ENCODE measurements at regions of chr3 and their contacts with region 1.

Region 1: DNA sequence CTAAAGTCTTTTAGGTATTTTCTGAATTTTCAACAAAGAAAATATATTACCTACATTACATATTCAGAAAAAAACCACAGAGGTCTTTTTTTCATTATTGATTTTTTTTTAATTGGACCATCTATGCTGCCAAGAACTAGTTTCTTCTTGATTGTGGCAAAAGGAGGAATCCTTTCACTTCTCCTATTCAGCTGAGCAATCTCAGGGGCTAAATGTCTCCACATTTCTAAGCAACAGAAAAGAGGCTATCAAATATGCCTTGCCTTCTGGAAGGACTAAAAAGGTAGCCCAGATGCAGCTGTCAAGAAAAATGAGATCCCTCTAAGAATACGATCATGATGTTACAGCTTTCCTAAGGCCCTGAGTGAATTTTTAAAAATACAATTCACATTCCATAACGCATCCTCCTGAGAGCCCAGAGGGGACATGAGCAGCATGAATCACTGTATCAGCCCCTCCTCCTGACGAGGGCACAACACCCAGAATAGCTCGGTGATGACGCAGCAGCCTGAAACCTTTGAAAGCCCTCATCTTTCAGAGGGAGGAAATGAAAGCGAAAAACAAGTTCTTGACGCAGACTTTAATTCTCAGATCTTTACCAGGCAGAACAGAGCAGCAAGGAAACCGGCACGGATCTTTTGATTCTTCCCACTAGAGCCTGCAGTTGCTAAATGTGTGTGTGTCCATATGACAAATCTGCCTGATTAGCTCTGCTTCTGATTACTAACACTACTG is 24.6 kb downstream of the RUBCN start:
- DNase-seq: peak; percentile 93
- ATAC-seq: peak; percentile 94
- H3K4me3 ChIP-seq: peak overlapping the region in 4 of 5 experiments; percentile 38 to 57 (median 50)
- H3K4me3 Mint-ChIP-seq: peak overlapping the region; percentile 84
- H3K27ac ChIP-seq: peak overlapping the region; percentile 72 to 77
- H3K27ac Mint-ChIP-seq: peak overlapping the region; percentile 93
- H3K4me1 ChIP-seq: peaks cover 28% of the 10 kb centered on the region in 2 donors
- H3K4me1 Mint-ChIP-seq: peaks cover 51% of the 10 kb centered on the region
- H3K27me3 ChIP-seq: no peaks in the 10 kb centered on the region
- H3K27me3 Mint-ChIP-seq: no peaks in the 10 kb centered on the region
- CTCF ChIP-seq: no peak

Region 2: GRCh38 chr3:195932456-195933430 is 1779.4 kb before region 1 on chr3:
- CTCF ChIA-PET with region 1: no interaction called
- POLR2A ChIA-PET with region 1: no interaction called
- intact Hi-C with region 1: no loop called
- DNase-seq: no peak
- ATAC-seq: no peak
- H3K4me3 ChIP-seq: no peak overlapping the region
- H3K4me3 Mint-ChIP-seq: no peak overlapping the region
- H3K27ac ChIP-seq: no peak overlapping the region
- H3K27ac Mint-ChIP-seq: no peak overlapping the region
- H3K4me1 ChIP-seq: no peaks in the 10 kb centered on the region
- H3K4me1 Mint-ChIP-seq: no peaks in the 10 kb centered on the region
- H3K27me3 ChIP-seq: no peaks in the 10 kb centered on the region
- H3K27me3 Mint-ChIP-seq: no peaks in the 10 kb centered on the region
- CTCF ChIP-seq: no peak

Region 3: DNA sequence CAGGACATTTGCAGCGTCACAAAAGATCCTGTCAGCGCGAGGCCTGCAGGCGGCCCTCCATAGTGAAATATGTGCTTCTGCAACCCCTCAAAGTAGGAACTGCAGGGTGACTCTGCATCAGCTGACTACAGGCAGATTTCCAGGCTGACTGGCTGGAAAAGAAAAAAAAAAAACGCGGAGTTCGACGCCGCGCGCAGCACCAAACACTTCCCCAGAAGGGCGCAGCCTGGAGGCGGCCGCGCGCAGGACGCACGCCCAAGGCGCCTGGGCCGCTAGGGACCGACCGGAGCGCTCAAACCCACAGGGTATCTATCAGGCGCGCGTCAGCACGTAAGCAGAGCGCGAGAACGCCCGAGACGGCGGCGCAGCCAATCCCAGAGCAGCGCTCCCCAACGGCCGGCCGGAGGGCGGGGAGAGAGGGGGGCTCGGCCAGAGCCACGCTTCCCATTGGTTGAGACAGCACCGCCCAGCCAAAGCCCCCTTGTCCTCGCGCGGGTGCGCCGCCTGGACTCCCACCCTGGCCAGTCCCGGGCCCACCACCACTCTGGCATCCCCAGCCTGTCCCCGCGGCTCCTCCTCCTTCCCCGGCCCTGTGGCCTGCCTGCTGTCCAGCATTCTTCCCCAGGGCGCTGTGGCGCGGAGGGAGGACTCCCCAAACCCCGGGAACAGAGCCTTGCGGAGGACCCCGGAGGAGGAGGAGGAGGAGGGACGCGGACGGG is 157.4 kb before region 1 on chr3:
- CTCF ChIA-PET with region 1: no interaction called
- POLR2A ChIA-PET with region 1: no interaction called
- intact Hi-C with region 1: loop called (anchors 1 kb)
- DNase-seq: peak; percentile 95
- ATAC-seq: peak; percentile 93
- H3K4me3 ChIP-seq: peak overlapping the region; percentile 55 to 93 (median 76)
- H3K4me3 Mint-ChIP-seq: peak overlapping the region; percentile 94
- H3K27ac ChIP-seq: peak overlapping the region; percentile 80 to 92
- H3K27ac Mint-ChIP-seq: peak overlapping the region; percentile 90
- H3K4me1 ChIP-seq: peaks cover 6 to 13% of the 10 kb centered on the region in 2 donors
- H3K4me1 Mint-ChIP-seq: peaks cover 9% of the 10 kb centered on the region
- H3K27me3 ChIP-seq: peaks cover 0 to 2% (median 0%) of the 10 kb centered on the region in 4 experiments
- H3K27me3 Mint-ChIP-seq: peaks cover 7% of the 10 kb centered on the region
- CTCF ChIP-seq: peak; percentile 61

Region 4: DNA sequence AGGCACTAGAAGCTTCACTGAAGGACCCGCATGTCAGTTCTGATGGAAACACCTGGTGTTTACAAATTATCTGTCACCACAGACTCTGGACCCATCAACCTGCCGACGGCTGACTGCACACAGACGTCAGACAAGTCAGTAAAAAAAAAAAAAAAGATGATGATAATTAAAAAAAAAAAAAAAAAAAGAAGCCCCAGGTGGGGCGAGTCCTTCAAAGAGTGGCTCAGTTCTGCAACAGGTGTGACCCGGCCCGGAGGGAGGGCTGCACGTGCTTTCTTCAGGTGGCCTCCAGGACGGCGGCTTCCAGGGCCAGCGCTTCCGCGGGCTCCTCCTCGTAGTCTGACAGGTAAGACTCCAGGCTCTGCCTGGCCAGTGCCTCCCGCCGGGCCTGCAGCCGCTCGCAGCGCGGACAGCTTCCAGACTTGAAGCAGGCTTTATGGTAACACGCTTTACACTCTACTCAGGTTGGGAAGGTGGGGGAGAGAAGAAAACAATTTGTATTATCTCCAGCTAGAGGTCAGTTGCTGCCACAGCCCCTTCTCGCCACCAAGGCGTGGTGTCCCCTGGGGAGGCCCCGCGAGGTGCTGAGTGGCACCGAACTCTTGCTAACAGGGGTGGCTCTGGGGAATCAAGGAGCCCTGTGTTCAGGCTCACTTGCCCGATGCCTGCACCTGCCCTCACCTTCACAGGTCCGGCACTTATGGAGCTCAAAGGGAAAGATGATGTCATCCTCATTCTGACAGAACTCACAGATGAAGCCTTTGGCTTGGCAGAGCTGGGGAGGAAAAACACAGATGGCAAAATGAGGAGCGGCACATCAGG is 37.2 kb before region 1 on chr3:
- CTCF ChIA-PET with region 1: interaction called, 8 read pairs
- POLR2A ChIA-PET with region 1: no interaction called
- intact Hi-C with region 1: loop called (anchors 1 kb)
- DNase-seq: peak; percentile 80
- ATAC-seq: peak; percentile 91
- H3K4me3 ChIP-seq: no peak overlapping the region
- H3K4me3 Mint-ChIP-seq: peak overlapping the region; percentile 89
- H3K27ac ChIP-seq: peak overlapping the region; percentile 73
- H3K27ac Mint-ChIP-seq: peak overlapping the region; percentile 96
- H3K4me1 ChIP-seq: peaks cover 3 to 21% of the 10 kb centered on the region in 2 donors
- H3K4me1 Mint-ChIP-seq: peaks cover 47% of the 10 kb centered on the region
- H3K27me3 ChIP-seq: no peaks in the 10 kb centered on the region
- H3K27me3 Mint-ChIP-seq: no peaks in the 10 kb centered on the region
- CTCF ChIP-seq: no peak

Region 5: GRCh38 chr3:197692641-197693040 is 19.5 kb before region 1 on chr3:
- CTCF ChIA-PET with region 1: no interaction called
- POLR2A ChIA-PET with region 1: no interaction called
- intact Hi-C with region 1: no loop called
- DNase-seq: no peak
- ATAC-seq: no peak
- H3K4me3 ChIP-seq: no peak overlapping the region
- H3K4me3 Mint-ChIP-seq: no peak overlapping the region
- H3K27ac ChIP-seq: no peak overlapping the region
- H3K27ac Mint-ChIP-seq: peak overlapping the region; percentile 50
- H3K4me1 ChIP-seq: no peaks in the 10 kb centered on the region
- H3K4me1 Mint-ChIP-seq: no peaks in the 10 kb centered on the region
- H3K27me3 ChIP-seq: no peaks in the 10 kb centered on the region
- H3K27me3 Mint-ChIP-seq: no peaks in the 10 kb centered on the region
- CTCF ChIP-seq: no peak

Region 6: DNA sequence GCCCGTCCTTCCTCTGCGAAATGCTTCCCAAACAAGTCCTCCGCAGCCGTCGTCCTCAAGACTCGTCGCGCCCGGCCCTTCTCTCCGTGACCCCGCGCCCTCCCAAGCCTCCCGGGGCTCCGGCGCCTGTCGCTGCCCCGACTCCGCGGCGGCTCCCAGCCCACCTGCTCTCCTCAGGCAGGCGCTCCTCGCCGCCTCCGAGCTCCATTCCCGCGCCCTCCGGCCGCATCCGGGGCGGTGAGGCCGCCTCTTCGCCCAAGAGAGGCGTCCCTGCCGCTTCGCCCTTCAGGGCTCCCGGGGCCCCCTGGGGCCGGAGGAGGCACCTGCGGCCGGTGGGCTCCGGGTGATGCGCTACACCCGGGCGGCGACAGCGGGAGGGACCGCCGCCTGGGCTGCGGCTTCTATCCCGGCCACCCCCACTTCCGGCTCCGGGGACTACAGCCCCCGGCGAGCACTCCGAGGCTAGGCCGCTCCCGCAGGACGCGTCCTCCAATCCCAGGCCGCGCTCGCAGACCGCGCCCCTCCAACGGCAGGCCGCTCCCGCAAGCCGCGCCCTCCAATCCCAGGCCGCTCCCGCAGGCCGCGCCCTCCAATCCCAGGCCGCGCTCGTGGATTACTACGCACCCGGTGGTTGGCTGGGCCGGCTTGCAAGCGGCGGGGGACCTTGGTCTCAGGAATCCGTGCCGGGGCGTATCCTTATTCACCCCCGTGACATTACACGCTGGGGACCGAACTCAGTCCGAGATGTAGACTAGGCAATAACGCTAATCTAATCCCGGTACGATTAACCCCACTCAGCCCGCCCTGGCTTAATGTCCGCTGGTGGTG is 24.6 kb after region 1 on chr3 and contains the start of gene RUBCN:
- CTCF ChIA-PET with region 1: interaction called, 26 read pairs
- POLR2A ChIA-PET with region 1: interaction called, 14 read pairs
- intact Hi-C with region 1: loop called (anchors 1 kb)
- DNase-seq: peak; percentile 95
- ATAC-seq: peak; percentile 86
- H3K4me3 ChIP-seq: peak within 1 kb of the TSS; percentile 61 to 93 (median 87)
- H3K4me3 Mint-ChIP-seq: peak within 1 kb of the TSS; percentile 100
- H3K27ac ChIP-seq: peak within 1 kb of the TSS; percentile 89 to 95
- H3K27ac Mint-ChIP-seq: peak within 1 kb of the TSS; percentile 99
- H3K4me1 ChIP-seq: peaks cover 47 to 51% of the 10 kb centered on the region in 2 donors
- H3K4me1 Mint-ChIP-seq: peaks cover 50% of the 10 kb centered on the region
- H3K27me3 ChIP-seq: no peaks in the 10 kb centered on the region
- H3K27me3 Mint-ChIP-seq: no peaks in the 10 kb centered on the region
- CTCF ChIP-seq: no peak
- total RNA-seq, gene RUBCN: 423 and 427 TPM in 2 replicates

Region 7: DNA sequence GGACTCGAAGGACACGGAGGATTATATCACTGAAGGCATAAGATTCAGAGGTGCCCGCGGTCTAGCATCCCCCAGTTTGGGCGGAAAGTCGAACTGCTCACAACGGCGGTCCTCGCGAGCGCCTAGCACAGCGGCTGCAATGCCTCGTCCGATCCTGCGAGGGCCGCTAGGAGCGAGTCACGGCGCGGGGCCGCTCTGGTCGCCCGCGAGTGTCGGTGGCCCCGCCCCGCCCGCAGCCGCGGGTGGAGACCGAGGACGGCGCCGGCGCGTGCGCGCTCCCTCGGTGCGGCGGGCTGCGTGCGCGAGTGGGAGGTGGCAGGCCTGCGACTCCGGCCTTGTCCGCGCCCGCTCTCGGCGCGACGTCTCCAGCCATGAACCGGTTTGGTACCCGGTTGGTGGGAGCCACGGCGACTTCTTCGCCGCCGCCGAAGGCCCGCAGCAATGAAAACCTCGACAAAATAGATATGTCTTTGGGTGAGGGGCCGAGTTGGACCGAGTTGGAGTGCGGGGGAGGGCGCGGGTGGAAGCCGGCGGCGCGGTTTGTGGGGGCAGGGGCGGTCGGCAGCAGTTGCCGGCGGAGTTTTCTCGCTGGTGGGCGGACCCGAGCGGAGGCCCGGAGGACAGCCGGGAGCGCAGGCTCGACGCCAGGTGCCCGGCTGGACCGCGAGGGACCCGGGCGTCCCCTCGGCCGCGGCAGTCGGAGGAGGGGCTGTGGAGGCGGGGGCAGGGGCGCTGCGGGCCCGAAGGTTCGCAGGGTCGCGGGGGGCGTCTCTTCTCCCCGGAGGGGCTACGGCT is 37.7 kb after region 1 on chr3 and contains the start of gene FYTTD1:
- CTCF ChIA-PET with region 1: interaction called, 5 read pairs
- POLR2A ChIA-PET with region 1: interaction called, 6 read pairs
- intact Hi-C with region 1: loop called (anchors 1 kb)
- DNase-seq: peak; percentile 95
- ATAC-seq: peak; percentile 90
- H3K4me3 ChIP-seq: peak within 1 kb of the TSS; percentile 76 to 97 (median 83)
- H3K4me3 Mint-ChIP-seq: peak within 1 kb of the TSS; percentile 96
- H3K27ac ChIP-seq: peak within 1 kb of the TSS; percentile 88 to 94
- H3K27ac Mint-ChIP-seq: peak within 1 kb of the TSS; percentile 97
- H3K4me1 ChIP-seq: peaks cover 18 to 26% of the 10 kb centered on the region in 2 donors
- H3K4me1 Mint-ChIP-seq: peaks cover 43% of the 10 kb centered on the region
- H3K27me3 ChIP-seq: no peaks in the 10 kb centered on the region
- H3K27me3 Mint-ChIP-seq: no peaks in the 10 kb centered on the region
- CTCF ChIP-seq: peak; percentile 64
- total RNA-seq, gene FYTTD1: 110 and 121 TPM in 2 replicates

Region 8: GRCh38 chr3:197801891-197802778 is 90.0 kb after region 1 on chr3:
- CTCF ChIA-PET with region 1: interaction called, 6 read pairs
- POLR2A ChIA-PET with region 1: no interaction called
- intact Hi-C with region 1: loop called (anchors 1 kb)
- DNase-seq: peak; percentile 66
- ATAC-seq: peak; percentile 54
- H3K4me3 ChIP-seq: no peak overlapping the region
- H3K4me3 Mint-ChIP-seq: no peak overlapping the region
- H3K27ac ChIP-seq: peak overlapping the region in 1 of 2 donors; percentile 27
- H3K27ac Mint-ChIP-seq: peak overlapping the region; percentile 12
- H3K4me1 ChIP-seq: peaks cover 15 to 28% of the 10 kb centered on the region in 2 donors
- H3K4me1 Mint-ChIP-seq: peaks cover 51% of the 10 kb centered on the region
- H3K27me3 ChIP-seq: no peaks in the 10 kb centered on the region
- H3K27me3 Mint-ChIP-seq: no peaks in the 10 kb centered on the region
- CTCF ChIP-seq: peak; percentile 80